CD4-positive, alpha-beta memory T cell (primary cell): ENCODE measurements at regions of chr9 and their contacts with region 1.

Region 1: GRCh38 chr9:134170532-134171315 is 6.4 kb upstream of the RNU6ATAC start:
- DNase-seq: peak in 4 of 5 donors; percentile 26 to 48 (median 28)
- H3K4me3 ChIP-seq: no peak overlapping the region
- H3K4me3 Mint-ChIP-seq: no peak overlapping the region
- H3K27ac ChIP-seq: no peak overlapping the region
- H3K27ac Mint-ChIP-seq: no peak overlapping the region
- H3K4me1 ChIP-seq: no peaks in the 10 kb centered on the region
- H3K4me1 Mint-ChIP-seq: peaks cover 0 to 9% (median 2%) of the 10 kb centered on the region in 4 donors
- H3K27me3 ChIP-seq: no peaks in the 10 kb centered on the region
- H3K27me3 Mint-ChIP-seq: no peaks in the 10 kb centered on the region

Region 2: GRCh38 chr9:134217832-134218629 is 47.3 kb after region 1 on chr9:
- CTCF ChIA-PET with region 1: interaction called, 21 read pairs
- POLR2A ChIA-PET with region 1: interaction called, 5 read pairs
- intact Hi-C with region 1: loop called (anchors 1 kb)
- DNase-seq: no peak
- H3K4me3 ChIP-seq: no peak overlapping the region
- H3K4me3 Mint-ChIP-seq: no peak overlapping the region
- H3K27ac ChIP-seq: no peak overlapping the region
- H3K27ac Mint-ChIP-seq: peak overlapping the region in 1 of 7 donors; percentile 47
- H3K4me1 ChIP-seq: no peaks in the 10 kb centered on the region
- H3K4me1 Mint-ChIP-seq: no peaks in the 10 kb centered on the region
- H3K27me3 ChIP-seq: no peaks in the 10 kb centered on the region
- H3K27me3 Mint-ChIP-seq: no peaks in the 10 kb centered on the region

Region 3: GRCh38 chr9:134858051-134858841 is 687.5 kb after region 1 on chr9:
- CTCF ChIA-PET with region 1: no interaction called
- POLR2A ChIA-PET with region 1: no interaction called
- intact Hi-C with region 1: no loop called
- DNase-seq: no peak
- H3K4me3 ChIP-seq: no peak overlapping the region
- H3K4me3 Mint-ChIP-seq: no peak overlapping the region
- H3K27ac ChIP-seq: no peak overlapping the region
- H3K27ac Mint-ChIP-seq: no peak overlapping the region
- H3K4me1 ChIP-seq: no peaks in the 10 kb centered on the region
- H3K4me1 Mint-ChIP-seq: no peaks in the 10 kb centered on the region
- H3K27me3 ChIP-seq: peaks cover 4% of the 10 kb centered on the region
- H3K27me3 Mint-ChIP-seq: peaks cover 25 to 26% of the 10 kb centered on the region in 2 donors